ENCODE measurements at regions of chr2 and their contacts with region 1.

Region 1: DNA sequence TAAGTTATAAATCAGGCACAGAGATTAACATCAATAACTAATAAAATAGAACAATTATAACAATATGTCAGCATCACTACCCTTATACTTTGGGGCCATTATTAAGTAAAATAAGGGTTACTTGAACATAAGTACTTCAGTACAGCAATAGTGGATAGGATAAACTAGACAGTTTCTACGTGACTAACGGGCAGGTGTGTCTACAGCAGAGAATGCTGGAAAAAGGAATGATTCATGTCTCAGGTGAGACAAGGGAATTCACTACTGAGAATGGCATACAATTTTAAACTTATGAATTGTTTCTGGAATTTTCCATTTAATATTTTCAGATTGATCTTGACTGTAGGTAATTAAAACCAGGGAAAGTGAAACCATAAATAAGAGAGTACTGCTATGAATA is 5.5 kb downstream of the WDR75 start:
- DNase-seq: no peak
- ATAC-seq: no peak
- H3K4me3 Mint-ChIP-seq: no peak overlapping the region
- H3K27ac Mint-ChIP-seq: no peak overlapping the region
- H3K4me1 Mint-ChIP-seq: peaks cover 19% of the 10 kb centered on the region
- H3K27me3 Mint-ChIP-seq: no peaks in the 10 kb centered on the region
- CTCF ChIP-seq: no peak

Region 2: DNA sequence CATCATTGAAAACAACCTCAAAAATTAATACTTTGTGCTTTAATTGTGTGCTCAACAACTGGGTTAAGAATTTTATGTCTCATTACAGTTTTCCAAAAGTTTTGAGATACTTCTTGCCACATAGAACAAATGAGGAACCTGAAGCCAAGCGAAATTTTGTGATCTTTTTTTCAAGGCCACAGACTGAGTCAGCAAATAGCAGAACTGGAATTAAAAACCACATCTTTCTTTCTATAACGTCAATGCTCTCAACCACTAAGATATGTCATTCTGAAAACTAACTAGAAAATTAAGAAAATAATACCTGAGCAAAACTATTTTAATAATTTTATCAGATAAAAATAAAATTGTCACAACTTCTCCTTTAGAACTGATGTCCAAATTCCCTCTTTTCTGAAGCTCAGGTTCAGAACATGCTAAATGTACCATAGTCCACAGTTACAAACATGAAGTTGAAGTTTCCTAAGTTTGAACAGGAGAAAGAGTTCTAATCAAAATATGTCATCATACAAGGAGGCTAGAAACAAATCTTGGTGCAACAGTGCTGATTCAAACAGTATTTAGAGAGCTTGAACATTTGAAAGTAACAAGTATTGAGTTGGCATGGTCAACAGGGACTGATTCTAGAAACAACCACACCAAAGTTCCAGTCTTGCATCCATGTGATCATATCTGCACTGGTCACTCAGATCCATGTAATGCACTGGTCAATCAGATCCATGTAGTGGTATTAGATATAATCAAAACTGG is 1971.1 kb before region 1 on chr2:
- CTCF ChIA-PET with region 1: no interaction called
- POLR2A ChIA-PET with region 1: no interaction called
- intact Hi-C with region 1: no loop called
- DNase-seq: no peak
- ATAC-seq: no peak
- H3K4me3 Mint-ChIP-seq: no peak overlapping the region
- H3K27ac Mint-ChIP-seq: no peak overlapping the region
- H3K4me1 Mint-ChIP-seq: no peaks in the 10 kb centered on the region
- H3K27me3 Mint-ChIP-seq: no peaks in the 10 kb centered on the region
- CTCF ChIP-seq: no peak

Region 3: DNA sequence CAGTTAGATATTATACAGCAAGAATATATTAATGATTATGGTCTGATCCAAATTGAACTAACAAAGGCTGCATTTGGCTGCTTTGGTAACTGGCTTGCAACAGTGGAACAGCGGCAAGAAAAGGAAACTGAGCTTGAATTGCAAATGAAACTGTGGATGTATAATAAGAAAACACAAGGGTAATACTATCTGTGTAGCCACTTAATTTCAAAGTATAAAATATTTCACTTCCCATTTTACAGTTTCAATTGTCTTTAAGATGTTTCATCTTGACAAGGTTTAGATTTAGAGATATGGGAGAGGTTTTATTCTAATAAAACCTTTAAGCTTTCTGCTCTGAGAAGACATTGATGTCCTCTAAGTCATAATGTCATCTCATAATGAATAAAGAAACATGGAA is 18.3 kb after region 1 on chr2:
- CTCF ChIA-PET with region 1: interaction called, 4 read pairs
- POLR2A ChIA-PET with region 1: interaction called, 3 read pairs
- intact Hi-C with region 1: loop called (anchors 2 kb)
- DNase-seq: no peak
- ATAC-seq: no peak
- H3K4me3 Mint-ChIP-seq: no peak overlapping the region
- H3K27ac Mint-ChIP-seq: no peak overlapping the region
- H3K4me1 Mint-ChIP-seq: peaks cover 20% of the 10 kb centered on the region
- H3K27me3 Mint-ChIP-seq: no peaks in the 10 kb centered on the region
- CTCF ChIP-seq: no peak

Region 4: DNA sequence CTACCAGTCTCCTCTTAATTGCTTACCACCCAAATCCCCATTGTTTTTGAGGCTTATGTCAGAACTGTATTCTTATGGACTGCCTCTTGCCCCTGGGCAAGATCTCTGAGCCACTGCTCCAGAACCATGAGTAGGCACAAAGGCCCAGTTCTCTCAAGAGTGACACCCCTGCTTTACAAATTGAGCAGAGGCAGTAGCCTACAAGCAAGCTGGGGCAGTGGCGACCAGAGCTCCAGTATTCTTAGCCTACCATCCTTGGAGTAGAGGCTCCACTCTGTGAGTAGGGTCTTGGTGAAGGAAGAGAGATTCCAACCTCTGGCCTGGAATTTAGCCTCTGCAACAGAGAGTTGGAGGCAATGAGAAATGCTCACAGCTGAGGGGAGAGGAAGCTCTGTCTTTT is 31.0 kb after region 1 on chr2:
- CTCF ChIA-PET with region 1: no interaction called
- POLR2A ChIA-PET with region 1: no interaction called
- intact Hi-C with region 1: no loop called
- DNase-seq: no peak
- ATAC-seq: no peak
- H3K4me3 Mint-ChIP-seq: no peak overlapping the region
- H3K27ac Mint-ChIP-seq: no peak overlapping the region
- H3K4me1 Mint-ChIP-seq: no peaks in the 10 kb centered on the region
- H3K27me3 Mint-ChIP-seq: no peaks in the 10 kb centered on the region
- CTCF ChIP-seq: no peak

Region 5: GRCh38 chr2:189506514-189506976 is 59.8 kb after region 1 on chr2:
- CTCF ChIA-PET with region 1: no interaction called
- POLR2A ChIA-PET with region 1: no interaction called
- intact Hi-C with region 1: no loop called
- DNase-seq: no peak
- ATAC-seq: no peak
- H3K4me3 Mint-ChIP-seq: no peak overlapping the region
- H3K27ac Mint-ChIP-seq: no peak overlapping the region
- H3K4me1 Mint-ChIP-seq: no peaks in the 10 kb centered on the region
- H3K27me3 Mint-ChIP-seq: peaks cover 2% of the 10 kb centered on the region
- CTCF ChIP-seq: no peak